CD8-positive, alpha-beta T cell (primary cell): ENCODE measurements at regions of chr14 and their contacts with region 1.

Region 1: DNA sequence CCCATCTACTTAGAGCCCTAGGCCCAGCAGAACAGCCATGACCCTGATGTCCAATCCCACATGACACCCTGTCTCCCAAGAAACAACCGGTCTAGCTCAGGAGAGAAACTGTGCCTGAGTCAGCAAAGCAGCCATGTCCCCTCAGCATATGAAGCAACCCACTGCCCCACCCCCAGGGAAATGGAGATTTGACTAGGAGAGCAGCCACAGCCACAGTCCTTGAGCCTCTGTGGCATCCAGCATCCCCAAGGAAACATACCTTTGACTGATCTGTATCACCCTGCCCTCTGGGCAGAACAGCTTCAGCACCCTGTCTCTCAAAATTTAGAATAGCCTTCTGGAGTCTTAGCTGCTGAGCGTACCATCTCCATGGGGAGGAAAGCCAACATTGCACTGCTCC is 642.0 kb upstream of the FBXO33 start:
- DNase-seq: no peak
- ATAC-seq: no peak
- H3K4me3 ChIP-seq: no peak overlapping the region
- H3K4me3 Mint-ChIP-seq: no peak overlapping the region
- H3K27ac ChIP-seq: no peak overlapping the region
- H3K27ac Mint-ChIP-seq: no peak overlapping the region
- H3K4me1 ChIP-seq: no peaks in the 10 kb centered on the region
- H3K4me1 Mint-ChIP-seq: no peaks in the 10 kb centered on the region
- H3K27me3 ChIP-seq: no peaks in the 10 kb centered on the region
- H3K27me3 Mint-ChIP-seq: no peaks in the 10 kb centered on the region
- CTCF ChIP-seq: no peak

Region 2: GRCh38 chr14:39203659-39204606 is 870.3 kb before region 1 on chr14:
- CTCF ChIA-PET with region 1: no interaction called
- POLR2A ChIA-PET with region 1: no interaction called
- intact Hi-C with region 1: no loop called
- DNase-seq: no peak
- ATAC-seq: no peak
- H3K4me3 ChIP-seq: no peak overlapping the region
- H3K4me3 Mint-ChIP-seq: no peak overlapping the region
- H3K27ac ChIP-seq: no peak overlapping the region
- H3K27ac Mint-ChIP-seq: no peak overlapping the region
- H3K4me1 ChIP-seq: no peaks in the 10 kb centered on the region
- H3K4me1 Mint-ChIP-seq: peaks cover 6% of the 10 kb centered on the region
- H3K27me3 ChIP-seq: no peaks in the 10 kb centered on the region
- H3K27me3 Mint-ChIP-seq: no peaks in the 10 kb centered on the region
- CTCF ChIP-seq: no peak

Region 3: DNA sequence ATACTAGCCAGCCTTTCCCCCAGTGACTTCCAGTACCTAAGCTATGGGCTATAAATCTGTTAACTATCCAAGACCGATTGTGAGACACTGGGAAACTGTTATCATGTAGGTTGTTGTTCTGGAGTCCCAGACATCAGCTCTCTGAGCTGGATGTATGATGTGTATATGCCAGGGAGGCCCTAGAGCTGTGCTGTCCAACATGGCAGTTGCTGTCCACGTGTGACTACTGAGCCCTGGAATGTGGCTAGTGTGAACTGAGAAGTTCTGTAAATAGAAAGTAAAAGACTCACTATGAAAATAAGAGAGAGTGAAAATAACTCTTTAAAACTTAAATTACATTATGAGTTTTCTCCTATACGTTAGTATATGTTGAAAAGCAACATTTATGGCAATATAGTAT is 113.8 kb after region 1 on chr14:
- CTCF ChIA-PET with region 1: no interaction called
- POLR2A ChIA-PET with region 1: no interaction called
- intact Hi-C with region 1: loop called in 1 of 2 experiments (anchors 5 kb)
- DNase-seq: no peak
- ATAC-seq: no peak
- H3K4me3 ChIP-seq: no peak overlapping the region
- H3K4me3 Mint-ChIP-seq: no peak overlapping the region
- H3K27ac ChIP-seq: no peak overlapping the region
- H3K27ac Mint-ChIP-seq: no peak overlapping the region
- H3K4me1 ChIP-seq: no peaks in the 10 kb centered on the region
- H3K4me1 Mint-ChIP-seq: no peaks in the 10 kb centered on the region
- H3K27me3 ChIP-seq: no peaks in the 10 kb centered on the region
- H3K27me3 Mint-ChIP-seq: no peaks in the 10 kb centered on the region
- CTCF ChIP-seq: no peak